Panc1 (cell line): ENCODE measurements at regions of chr21 and their contacts with region 1.

Region 1: DNA sequence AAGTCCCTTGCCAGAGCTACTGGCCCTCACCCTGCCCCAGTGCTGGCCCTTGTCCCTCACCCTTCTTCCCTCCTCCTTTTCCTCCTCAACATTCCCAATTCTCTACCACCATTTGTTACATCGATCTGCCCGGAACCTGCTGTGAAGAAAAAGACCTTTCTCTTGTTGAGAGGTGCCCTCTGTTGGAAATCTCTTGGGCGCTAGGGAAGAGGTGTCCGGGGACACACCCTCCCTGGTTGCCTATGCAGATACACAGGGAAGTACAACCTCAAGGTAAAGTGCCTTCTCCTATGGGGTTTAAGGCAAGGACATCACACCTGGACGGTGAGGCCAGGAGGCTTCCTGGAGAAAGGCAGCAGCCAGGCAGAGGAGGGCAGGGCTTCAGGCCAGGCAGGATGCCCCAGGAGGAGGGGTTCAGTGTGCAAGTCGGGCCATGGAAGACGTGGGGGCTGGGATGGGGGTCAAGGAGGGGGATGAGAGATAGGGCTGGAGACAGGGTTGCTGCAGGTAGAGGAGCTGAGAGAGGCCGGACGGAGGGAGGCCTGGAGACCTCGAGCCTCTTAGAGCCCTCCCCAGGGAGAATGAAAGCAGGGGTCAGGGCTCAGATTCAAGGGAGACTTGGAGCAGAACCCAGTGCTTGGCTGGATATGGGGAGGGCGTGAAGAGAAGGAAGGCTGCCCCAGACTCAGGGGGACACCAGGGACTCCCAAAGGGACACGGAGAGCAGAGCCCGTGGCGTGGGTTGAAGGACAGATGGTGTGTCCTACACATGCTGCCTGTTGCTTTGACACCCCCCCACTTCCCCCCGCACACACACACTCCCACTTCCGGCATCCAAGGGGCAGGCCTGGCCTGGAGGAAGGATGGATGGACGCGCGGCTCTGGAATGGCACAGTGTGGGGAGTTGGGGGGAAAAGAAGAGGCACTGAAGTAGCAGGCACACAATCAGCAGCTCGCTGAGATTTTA is 44.5 kb downstream of the RIPK4 start:
- DNase-seq: no peak
- ATAC-seq: no peak
- H3K4me3 ChIP-seq: no peak overlapping the region
- H3K27ac ChIP-seq: peak overlapping the region; percentile 8; the same call in 1 of the 2 replicates
- H3K4me1 ChIP-seq: peaks cover 23% of the 10 kb centered on the region
- H3K27me3 ChIP-seq: no peaks in the 10 kb centered on the region
- CTCF ChIP-seq: no peak

Region 2: GRCh38 chr21:41684381-41685245 is 37.7 kb before region 1 on chr21:
- CTCF ChIA-PET with region 1: interaction called, 3 read pairs
- POLR2A ChIA-PET with region 1: no interaction called
- in situ Hi-C with region 1: no loop called
- intact Hi-C with region 1: loop called (anchors 5 kb)
- DNase-seq: peak; percentile 18
- ATAC-seq: peak; percentile 52
- H3K4me3 ChIP-seq: no peak overlapping the region
- H3K27ac ChIP-seq: peak overlapping the region; percentile 97
- H3K4me1 ChIP-seq: peaks cover 60% of the 10 kb centered on the region
- H3K27me3 ChIP-seq: no peaks in the 10 kb centered on the region
- CTCF ChIP-seq: no peak